Posterior cingulate gyrus (tissue), 11 donors: ENCODE measurements at regions of chr11 and their contacts with region 1.

Region 1: GRCh38 chr11:9363954-9364912 is 20.2 kb upstream of the IPO7 start:
- DNase-seq: peak; percentile 84 to 99 (median 90)

Region 2: GRCh38 chr11:9314291-9315036 is 49.8 kb before region 1 on chr11 and contains the start of gene TMEM41B:
- intact Hi-C with region 1: loop called (anchors 1 kb)
- DNase-seq: peak; percentile 93 to 100 (median 97)